ENCODE measurements at regions of chr3 and their contacts with region 1.

Region 1: GRCh38 chr3:13884851-13885703 is 5.2 kb upstream of the WNT7A start:
- DNase-seq: peak in 8 of 9 experiments; percentile 59 to 81 (median 77)
- ATAC-seq: peak; percentile 80
- H3K4me3 ChIP-seq: no peak overlapping the region
- H3K4me3 Mint-ChIP-seq: no peak overlapping the region
- H3K27ac ChIP-seq: no peak overlapping the region
- H3K27ac Mint-ChIP-seq: no peak overlapping the region
- H3K4me1 ChIP-seq: peaks cover 16% of the 10 kb centered on the region
- H3K4me1 Mint-ChIP-seq: peaks cover 16% of the 10 kb centered on the region
- H3K27me3 ChIP-seq: peaks cover 0 to 4% of the 10 kb centered on the region in 2 experiments
- H3K27me3 Mint-ChIP-seq: peaks cover 24% of the 10 kb centered on the region
- CTCF ChIP-seq: peak; percentile 88

Region 2: GRCh38 chr3:13414040-13414729 is 470.9 kb before region 1 on chr3:
- CTCF ChIA-PET with region 1: no interaction called
- POLR2A ChIA-PET with region 1: no interaction called
- intact Hi-C with region 1: no loop called
- DNase-seq: peak; percentile 48 to 91 (median 79)
- ATAC-seq: peak; percentile 91
- H3K4me3 ChIP-seq: peak overlapping the region; percentile 19 to 29
- H3K4me3 Mint-ChIP-seq: peak overlapping the region; percentile 75
- H3K27ac ChIP-seq: peak overlapping the region; percentile 51 to 89
- H3K27ac Mint-ChIP-seq: peak overlapping the region; percentile 96
- H3K4me1 ChIP-seq: peaks cover 60% of the 10 kb centered on the region
- H3K4me1 Mint-ChIP-seq: peaks cover 69% of the 10 kb centered on the region
- H3K27me3 ChIP-seq: no peaks in the 10 kb centered on the region
- H3K27me3 Mint-ChIP-seq: no peaks in the 10 kb centered on the region
- CTCF ChIP-seq: no peak

Region 3: DNA sequence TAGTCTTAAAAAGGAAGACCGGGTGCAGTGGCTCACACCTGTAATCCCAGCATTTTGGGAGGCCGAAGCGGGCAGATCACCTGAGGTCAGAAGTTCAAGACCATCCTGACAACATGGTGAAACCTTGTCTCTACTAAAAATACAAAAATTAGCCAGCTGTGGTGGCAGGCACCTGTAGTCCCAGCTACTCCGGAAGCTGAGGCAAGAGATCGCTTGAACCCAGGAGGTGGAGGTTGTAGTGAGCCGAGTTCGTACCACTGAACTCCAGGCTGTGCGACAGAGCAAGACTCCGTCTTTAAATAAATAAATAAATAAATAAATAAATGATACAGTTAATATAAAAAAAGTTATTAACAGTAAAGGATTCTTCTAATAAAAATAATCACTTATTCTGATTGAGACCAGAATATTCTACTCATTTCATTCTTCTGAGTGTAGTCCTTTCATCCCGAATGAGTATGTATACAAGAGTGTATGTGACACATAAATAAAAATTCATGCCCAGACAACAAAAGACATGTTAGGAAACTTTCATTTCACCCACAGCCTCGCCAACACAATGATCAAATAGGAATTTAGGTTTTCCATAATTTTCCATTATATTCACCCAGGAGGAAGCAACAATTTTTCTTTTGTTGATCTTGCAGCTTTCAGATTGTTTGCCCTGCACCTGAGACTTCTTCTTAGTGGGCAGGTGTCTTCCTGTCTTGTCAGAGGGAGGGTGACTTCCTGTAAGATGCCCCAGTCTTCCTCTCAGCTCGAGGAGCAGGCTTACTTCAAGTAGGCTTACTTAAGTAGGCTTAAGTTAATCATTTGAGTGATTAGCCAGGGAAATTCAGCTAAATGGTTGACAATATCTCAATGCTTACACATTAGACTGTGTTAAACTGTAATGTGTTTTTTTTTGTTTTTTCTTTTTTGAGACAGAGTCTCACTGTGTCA is 457.1 kb before region 1 on chr3:
- CTCF ChIA-PET with region 1: no interaction called
- POLR2A ChIA-PET with region 1: no interaction called
- intact Hi-C with region 1: loop called in 1 of 2 experiments (anchors 5 kb)
- DNase-seq: peak in 5 of 9 experiments; percentile 35 to 78 (median 51)
- ATAC-seq: peak; percentile 99
- H3K4me3 ChIP-seq: peak overlapping the region in 1 of 2 experiments; percentile 2
- H3K4me3 Mint-ChIP-seq: peak overlapping the region; percentile 63
- H3K27ac ChIP-seq: peak overlapping the region; percentile 37 to 44
- H3K27ac Mint-ChIP-seq: peak overlapping the region; percentile 91
- H3K4me1 ChIP-seq: peaks cover 19% of the 10 kb centered on the region
- H3K4me1 Mint-ChIP-seq: peaks cover 36% of the 10 kb centered on the region
- H3K27me3 ChIP-seq: no peaks in the 10 kb centered on the region
- H3K27me3 Mint-ChIP-seq: no peaks in the 10 kb centered on the region
- CTCF ChIP-seq: no peak

Region 4: DNA sequence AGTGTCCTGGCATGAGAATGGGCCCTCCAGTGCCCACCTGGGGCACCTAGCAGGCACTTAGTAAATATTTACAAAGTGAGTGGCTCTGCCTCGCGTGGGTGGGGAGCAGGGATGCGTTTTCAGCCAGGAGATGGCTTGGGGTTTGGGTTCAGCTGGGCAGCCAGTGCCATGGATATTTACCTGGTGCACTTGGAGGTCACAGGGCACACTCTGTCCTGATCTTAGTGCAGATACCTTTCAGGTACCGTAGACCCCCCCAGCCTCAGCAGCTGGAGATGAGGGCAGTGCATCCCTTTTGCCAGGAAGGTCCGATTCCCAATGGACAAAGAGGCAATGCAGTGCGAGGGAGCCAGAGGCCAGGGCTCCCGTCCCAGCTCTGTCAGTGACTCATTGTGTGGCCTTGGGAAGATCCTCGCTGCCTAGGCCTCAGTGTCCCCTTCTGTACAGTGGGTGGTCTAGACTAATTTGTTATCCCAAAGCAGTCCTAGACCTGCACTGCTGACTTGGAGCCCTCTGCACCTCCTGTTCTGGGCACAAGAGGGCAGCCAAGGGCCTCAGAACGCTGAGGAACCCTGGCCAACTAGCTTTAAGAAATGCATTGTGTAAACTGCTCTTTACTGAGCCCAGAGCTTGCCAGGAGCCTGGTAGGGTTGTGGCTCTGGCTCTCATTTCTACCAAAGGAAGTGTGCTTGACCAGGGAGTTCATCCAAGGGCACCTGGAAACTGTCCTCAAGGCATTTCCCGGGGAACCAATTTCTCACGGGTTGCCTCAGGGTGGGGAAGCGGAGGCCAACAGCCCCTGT is 389.0 kb before region 1 on chr3:
- CTCF ChIA-PET with region 1: interaction called, 22 read pairs
- POLR2A ChIA-PET with region 1: no interaction called
- intact Hi-C with region 1: loop called (anchors 1 to 2 kb)
- DNase-seq: peak; percentile 51 to 81 (median 68)
- ATAC-seq: peak; percentile 99
- H3K4me3 ChIP-seq: no peak overlapping the region
- H3K4me3 Mint-ChIP-seq: no peak overlapping the region
- H3K27ac ChIP-seq: no peak overlapping the region
- H3K27ac Mint-ChIP-seq: no peak overlapping the region
- H3K4me1 ChIP-seq: no peaks in the 10 kb centered on the region
- H3K4me1 Mint-ChIP-seq: no peaks in the 10 kb centered on the region
- H3K27me3 ChIP-seq: no peaks in the 10 kb centered on the region
- H3K27me3 Mint-ChIP-seq: no peaks in the 10 kb centered on the region
- CTCF ChIP-seq: peak; percentile 76

Region 5: DNA sequence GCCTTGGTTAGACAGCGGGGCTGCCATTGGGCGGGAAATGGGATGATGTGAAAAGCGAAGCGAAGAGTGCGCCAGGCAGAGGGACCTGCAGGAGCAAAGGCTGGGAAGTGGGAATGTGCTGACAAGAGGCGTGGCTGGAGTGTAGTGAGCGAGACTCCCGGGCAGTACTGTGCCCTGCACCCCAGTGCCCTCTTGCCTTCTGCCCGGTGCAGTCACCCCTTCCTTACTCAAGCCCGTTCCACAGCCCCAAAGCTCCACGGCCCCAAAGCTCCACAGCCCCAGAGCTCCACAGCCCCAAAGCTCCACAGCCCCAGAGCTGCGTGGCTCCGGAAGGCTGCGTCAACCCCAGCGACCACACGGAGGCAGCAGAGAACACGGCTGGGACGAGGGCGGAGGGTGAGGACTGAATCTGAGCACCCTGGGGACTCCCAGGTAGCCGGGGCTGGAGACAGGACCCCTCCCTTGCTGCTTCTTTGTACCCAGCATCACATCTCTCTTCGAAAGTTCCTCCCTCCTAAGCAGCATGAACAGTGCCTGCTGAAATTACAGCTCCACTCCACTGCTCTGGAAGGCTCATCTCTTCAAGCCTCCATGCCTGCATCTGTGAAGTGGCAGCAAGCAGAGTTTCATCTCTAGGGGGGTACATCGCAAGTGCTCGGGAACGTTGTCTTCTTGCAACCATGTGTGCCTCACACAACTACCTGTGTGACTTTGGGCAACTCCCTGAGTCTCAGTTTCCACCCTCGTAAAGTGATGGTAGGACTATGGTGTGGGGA is 227.2 kb before region 1 on chr3:
- CTCF ChIA-PET with region 1: interaction called, 670 read pairs
- POLR2A ChIA-PET with region 1: interaction called, 31 read pairs
- intact Hi-C with region 1: loop called (anchors 1 kb)
- DNase-seq: peak; percentile 44 to 80 (median 68)
- ATAC-seq: peak; percentile 83
- H3K4me3 ChIP-seq: no peak overlapping the region
- H3K4me3 Mint-ChIP-seq: no peak overlapping the region
- H3K27ac ChIP-seq: no peak overlapping the region
- H3K27ac Mint-ChIP-seq: no peak overlapping the region
- H3K4me1 ChIP-seq: peaks cover 26% of the 10 kb centered on the region
- H3K4me1 Mint-ChIP-seq: peaks cover 29% of the 10 kb centered on the region
- H3K27me3 ChIP-seq: no peaks in the 10 kb centered on the region
- H3K27me3 Mint-ChIP-seq: peaks cover 12% of the 10 kb centered on the region
- CTCF ChIP-seq: peak; percentile 66

Region 6: DNA sequence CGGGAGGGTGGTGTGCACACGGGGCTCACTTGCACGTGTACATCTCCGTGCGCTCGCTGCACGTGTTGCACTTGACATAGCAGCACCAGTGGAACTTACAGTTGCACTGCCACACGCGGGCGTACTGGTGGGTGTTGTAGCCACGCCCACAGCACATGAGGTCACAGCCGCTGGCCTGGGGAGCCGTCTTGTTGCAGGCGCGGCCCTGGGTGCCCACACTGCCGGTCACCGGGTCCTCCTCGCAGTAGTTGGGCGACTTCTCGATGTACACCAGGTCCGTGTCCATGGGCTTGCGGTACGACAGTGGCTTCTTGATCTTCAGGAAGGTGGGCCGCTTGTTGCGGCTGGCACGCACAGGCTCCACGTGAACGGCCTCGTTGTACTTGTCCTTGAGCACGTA is 66.2 kb before region 1 on chr3:
- CTCF ChIA-PET with region 1: interaction called, 5 read pairs
- POLR2A ChIA-PET with region 1: interaction called, 3 read pairs
- intact Hi-C with region 1: loop called in 1 of 2 experiments (anchors 5 kb)
- DNase-seq: no peak
- ATAC-seq: no peak
- H3K4me3 ChIP-seq: no peak overlapping the region
- H3K4me3 Mint-ChIP-seq: no peak overlapping the region
- H3K27ac ChIP-seq: no peak overlapping the region
- H3K27ac Mint-ChIP-seq: no peak overlapping the region
- H3K4me1 ChIP-seq: no peaks in the 10 kb centered on the region
- H3K4me1 Mint-ChIP-seq: no peaks in the 10 kb centered on the region
- H3K27me3 ChIP-seq: no peaks in the 10 kb centered on the region
- H3K27me3 Mint-ChIP-seq: no peaks in the 10 kb centered on the region
- CTCF ChIP-seq: no peak

Region 7: DNA sequence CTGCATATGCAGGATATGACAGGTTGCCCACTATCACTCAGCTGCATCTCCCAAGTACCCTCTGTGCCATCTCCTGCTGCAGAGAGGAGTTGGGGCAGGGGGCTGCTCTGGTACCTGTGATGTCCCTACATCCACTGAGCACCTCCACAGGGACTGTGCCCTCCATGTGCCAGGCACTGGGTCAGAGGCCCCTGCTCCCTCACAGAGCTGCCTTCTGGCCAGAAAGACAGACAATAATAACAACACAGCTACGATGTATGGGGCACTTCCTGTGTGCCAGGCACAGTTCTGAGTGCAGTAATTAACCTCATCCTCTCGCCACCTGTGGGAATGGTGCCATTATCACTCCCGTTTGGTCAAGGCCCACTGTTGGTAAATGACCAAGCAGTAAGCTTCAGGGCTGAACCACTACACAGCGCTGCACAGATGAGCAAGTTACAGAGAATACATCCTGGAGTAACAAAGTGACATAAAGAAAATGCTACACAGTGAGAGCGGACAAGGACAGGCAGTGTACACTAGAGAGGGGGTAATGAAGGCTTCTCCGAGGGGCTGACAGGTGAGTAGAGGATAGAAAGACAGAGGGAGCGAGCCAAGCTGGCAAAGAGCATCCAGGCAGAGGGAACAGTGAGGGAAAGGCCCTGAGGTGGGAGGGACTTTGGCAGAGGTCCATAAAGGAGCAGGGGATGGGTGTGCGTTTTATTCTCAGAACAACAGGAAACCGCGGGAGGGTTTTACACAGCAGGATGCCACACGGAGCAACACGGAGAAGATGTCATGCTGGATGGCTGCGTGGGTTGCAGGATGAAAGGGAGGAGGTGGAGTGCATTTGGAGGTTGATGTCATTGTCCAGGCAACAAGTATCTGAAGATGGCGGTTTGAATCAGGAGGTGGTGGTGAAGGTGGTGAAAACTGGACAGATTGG is 18.8 kb before region 1 on chr3:
- CTCF ChIA-PET with region 1: interaction called, 26 read pairs
- POLR2A ChIA-PET with region 1: interaction called, 12 read pairs
- intact Hi-C with region 1: loop called in 1 of 2 experiments (anchors 1 kb)
- DNase-seq: peak; percentile 24 to 82 (median 57)
- ATAC-seq: peak; percentile 85
- H3K4me3 ChIP-seq: peak overlapping the region; percentile 7 to 11
- H3K4me3 Mint-ChIP-seq: peak overlapping the region; percentile 68
- H3K27ac ChIP-seq: peak overlapping the region; percentile 66 to 74
- H3K27ac Mint-ChIP-seq: peak overlapping the region; percentile 93
- H3K4me1 ChIP-seq: peaks cover 46% of the 10 kb centered on the region
- H3K4me1 Mint-ChIP-seq: peaks cover 60% of the 10 kb centered on the region
- H3K27me3 ChIP-seq: no peaks in the 10 kb centered on the region
- H3K27me3 Mint-ChIP-seq: no peaks in the 10 kb centered on the region
- CTCF ChIP-seq: no peak

Region 8: GRCh38 chr3:14274999-14275961 is 390.2 kb after region 1 on chr3:
- CTCF ChIA-PET with region 1: no interaction called
- POLR2A ChIA-PET with region 1: no interaction called
- intact Hi-C with region 1: no loop called
- DNase-seq: peak in 2 of 9 experiments; percentile 23 to 29
- ATAC-seq: no peak
- H3K4me3 ChIP-seq: no peak overlapping the region
- H3K4me3 Mint-ChIP-seq: no peak overlapping the region
- H3K27ac ChIP-seq: no peak overlapping the region
- H3K27ac Mint-ChIP-seq: no peak overlapping the region
- H3K4me1 ChIP-seq: no peaks in the 10 kb centered on the region
- H3K4me1 Mint-ChIP-seq: no peaks in the 10 kb centered on the region
- H3K27me3 ChIP-seq: no peaks in the 10 kb centered on the region
- H3K27me3 Mint-ChIP-seq: peaks cover 10% of the 10 kb centered on the region
- CTCF ChIP-seq: no peak

Region 9: DNA sequence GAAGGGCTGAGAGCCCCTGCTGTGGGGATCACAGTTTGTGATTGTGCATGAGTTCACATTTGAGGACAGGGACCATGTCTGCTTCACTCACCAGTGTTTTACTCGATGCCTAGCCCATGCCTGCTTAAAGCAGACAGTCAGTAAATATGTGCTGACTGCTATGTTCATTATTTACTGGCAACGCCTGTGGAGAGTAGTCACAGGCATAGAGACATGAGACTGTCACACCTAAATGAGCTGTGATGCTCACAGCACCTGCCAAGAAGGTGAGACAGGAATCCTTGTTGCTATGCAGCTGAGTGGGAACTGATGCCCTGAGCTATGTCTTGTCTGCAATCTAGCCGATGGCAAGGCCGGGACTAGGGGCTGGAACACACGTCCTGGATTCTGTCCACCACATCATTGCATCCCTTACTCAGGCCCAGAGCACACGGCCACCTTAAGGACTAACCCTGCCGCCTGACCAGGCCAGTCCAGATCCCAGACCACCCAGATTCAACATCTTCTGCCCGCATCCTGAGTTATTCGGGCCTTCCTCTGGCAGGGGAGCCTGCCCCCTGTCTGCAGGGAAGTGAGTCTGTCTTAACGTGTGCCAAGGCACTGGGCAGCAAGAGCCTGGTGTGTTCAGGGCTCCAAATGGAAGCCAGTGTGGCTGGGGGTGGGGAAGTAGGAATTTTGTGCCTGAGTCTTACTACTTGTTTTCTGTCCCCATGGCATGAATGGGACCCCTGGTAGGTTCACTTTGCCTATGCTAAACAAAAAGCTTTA is 978.4 kb after region 1 on chr3:
- CTCF ChIA-PET with region 1: no interaction called
- POLR2A ChIA-PET with region 1: no interaction called
- intact Hi-C with region 1: no loop called
- DNase-seq: no peak
- ATAC-seq: no peak
- H3K4me3 ChIP-seq: no peak overlapping the region
- H3K4me3 Mint-ChIP-seq: no peak overlapping the region
- H3K27ac ChIP-seq: no peak overlapping the region
- H3K27ac Mint-ChIP-seq: no peak overlapping the region
- H3K4me1 ChIP-seq: no peaks in the 10 kb centered on the region
- H3K4me1 Mint-ChIP-seq: no peaks in the 10 kb centered on the region
- H3K27me3 ChIP-seq: peaks cover 0 to 4% of the 10 kb centered on the region in 2 experiments
- H3K27me3 Mint-ChIP-seq: peaks cover 4% of the 10 kb centered on the region
- CTCF ChIP-seq: no peak

Measured in CD8-positive, alpha-beta T cell (primary cell).